ENCODE measurements at regions of chr17 and their contacts with region 1.

Region 1: GRCh38 chr17:20935740-20936139 is 107.1 kb downstream of the USP22 start:
- DNase-seq: peak in 1 of 2 experiments; percentile 73
- H3K4me3 ChIP-seq: peak overlapping the region; percentile 9; the same call in 1 of the 2 replicates
- H3K27ac ChIP-seq: peak overlapping the region; percentile 62
- H3K4me1 ChIP-seq: peaks cover 40% of the 10 kb centered on the region
- H3K27me3 ChIP-seq: no peaks in the 10 kb centered on the region
- CTCF ChIP-seq: no peak

Region 2: GRCh38 chr17:20999044-20999573 is 63.4 kb after region 1 on chr17:
- CTCF ChIA-PET with region 1: no interaction called
- POLR2A ChIA-PET with region 1: no interaction called
- intact Hi-C with region 1: no loop called
- DNase-seq: no peak
- H3K4me3 ChIP-seq: no peak overlapping the region
- H3K27ac ChIP-seq: no peak overlapping the region
- H3K4me1 ChIP-seq: no peaks in the 10 kb centered on the region
- H3K27me3 ChIP-seq: no peaks in the 10 kb centered on the region
- CTCF ChIP-seq: no peak

Region 3: GRCh38 chr17:21098934-21099689 is 163.4 kb after region 1 on chr17:
- CTCF ChIA-PET with region 1: no interaction called
- POLR2A ChIA-PET with region 1: no interaction called
- intact Hi-C with region 1: loop called (anchors 10 kb)
- DNase-seq: peak; percentile 78 to 81
- H3K4me3 ChIP-seq: peak overlapping the region; percentile 80
- H3K27ac ChIP-seq: no peak overlapping the region
- H3K4me1 ChIP-seq: peaks cover 7% of the 10 kb centered on the region; the same call in 1 of the 2 replicates
- H3K27me3 ChIP-seq: no peaks in the 10 kb centered on the region
- CTCF ChIP-seq: no peak

Region 4: DNA sequence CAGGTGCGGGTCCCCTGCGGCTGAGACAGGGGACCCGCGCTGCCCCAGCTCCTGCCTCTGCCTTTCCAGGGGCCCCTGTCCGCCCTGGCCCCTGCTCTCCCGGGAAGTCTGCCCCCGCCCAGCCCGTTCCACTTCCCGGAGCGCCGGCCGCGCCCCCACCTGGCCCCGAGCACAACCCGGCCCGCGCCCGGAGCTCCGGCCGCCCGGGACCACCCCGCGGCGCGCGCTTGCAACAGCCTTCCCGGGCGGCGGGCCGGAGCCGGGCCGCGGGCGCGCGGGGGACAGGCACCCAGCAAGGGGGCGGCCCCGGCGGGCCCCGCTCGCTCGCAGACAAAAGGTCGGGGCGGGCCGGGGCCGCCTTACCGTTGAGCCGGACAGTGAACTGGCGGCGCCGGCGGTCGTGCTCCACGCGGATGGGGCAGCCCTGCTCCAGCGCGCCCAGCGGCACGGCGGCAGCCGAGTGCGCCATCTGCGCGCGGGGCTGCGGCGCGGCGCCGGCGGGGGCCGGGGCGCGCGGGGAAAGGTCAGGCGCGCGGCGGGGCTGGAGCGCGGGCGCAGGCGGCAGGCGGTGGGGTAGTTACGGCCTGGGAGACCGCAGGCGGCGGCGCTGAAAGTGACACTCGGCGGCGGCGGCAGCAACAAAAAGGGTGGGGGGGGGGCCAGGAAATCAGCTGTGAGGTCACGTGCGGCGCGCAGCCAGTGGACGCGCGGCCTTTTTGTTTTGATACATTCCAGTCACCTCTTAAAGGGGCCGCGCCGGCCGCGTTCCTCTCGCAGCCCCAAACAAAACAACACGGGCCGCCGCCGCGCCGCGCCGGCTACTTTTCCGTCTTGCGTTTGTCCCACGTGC is 317.3 kb after region 1 on chr17 and contains the start of gene NATD1:
- CTCF ChIA-PET with region 1: no interaction called
- POLR2A ChIA-PET with region 1: no interaction called
- intact Hi-C with region 1: no loop called
- DNase-seq: peak; percentile 58 to 66
- H3K4me3 ChIP-seq: peak within 1 kb of the TSS; percentile 78
- H3K27ac ChIP-seq: no peak within 1 kb of the TSS
- H3K4me1 ChIP-seq: peaks cover 20% of the 10 kb centered on the region
- H3K27me3 ChIP-seq: 0 out of 2 replicates have a peak, but pooled peaks cover 4% of the 10 kb centered on the region
- CTCF ChIP-seq: no peak
- total RNA-seq, gene NATD1: 5.3 and 5.4 TPM in 2 replicates

Measured in PC-9 (cell line).